ENCODE measurements at regions of chr22 and their contacts with region 1.

Region 1: GRCh38 chr22:21641789-21642583 is at the start of gene SDF2L1:
- DNase-seq: peak; percentile 99
- ATAC-seq: peak; percentile 97
- H3K4me3 Mint-ChIP-seq: peak within 1 kb of the TSS; percentile 89
- H3K27ac Mint-ChIP-seq: peak within 1 kb of the TSS; percentile 89
- H3K4me1 Mint-ChIP-seq: peaks cover 26% of the 10 kb centered on the region
- H3K27me3 Mint-ChIP-seq: no peaks in the 10 kb centered on the region
- CTCF ChIP-seq: no peak
- total RNA-seq, gene SDF2L1: 38.6 to 41.3 TPM

Region 2: GRCh38 chr22:21624120-21624879 is 17.7 kb before region 1 on chr22:
- CTCF ChIA-PET with region 1: interaction called, 78 read pairs
- POLR2A ChIA-PET with region 1: interaction called, 98 read pairs
- intact Hi-C with region 1: no loop called
- DNase-seq: peak; percentile 66
- ATAC-seq: no peak
- H3K4me3 Mint-ChIP-seq: no peak overlapping the region
- H3K27ac Mint-ChIP-seq: peak overlapping the region; percentile 73
- H3K4me1 Mint-ChIP-seq: peaks cover 32% of the 10 kb centered on the region
- H3K27me3 Mint-ChIP-seq: no peaks in the 10 kb centered on the region
- CTCF ChIP-seq: peak; percentile 65

Region 3: GRCh38 chr22:21652010-21652546 is 10.1 kb after region 1 on chr22:
- CTCF ChIA-PET with region 1: interaction called, 32 read pairs
- POLR2A ChIA-PET with region 1: interaction called, 30 read pairs
- intact Hi-C with region 1: no loop called
- DNase-seq: peak; percentile 95
- ATAC-seq: peak; percentile 97
- H3K4me3 Mint-ChIP-seq: peak overlapping the region; percentile 89
- H3K27ac Mint-ChIP-seq: peak overlapping the region; percentile 83
- H3K4me1 Mint-ChIP-seq: peaks cover 22% of the 10 kb centered on the region
- H3K27me3 Mint-ChIP-seq: no peaks in the 10 kb centered on the region
- CTCF ChIP-seq: no peak

Region 4: DNA sequence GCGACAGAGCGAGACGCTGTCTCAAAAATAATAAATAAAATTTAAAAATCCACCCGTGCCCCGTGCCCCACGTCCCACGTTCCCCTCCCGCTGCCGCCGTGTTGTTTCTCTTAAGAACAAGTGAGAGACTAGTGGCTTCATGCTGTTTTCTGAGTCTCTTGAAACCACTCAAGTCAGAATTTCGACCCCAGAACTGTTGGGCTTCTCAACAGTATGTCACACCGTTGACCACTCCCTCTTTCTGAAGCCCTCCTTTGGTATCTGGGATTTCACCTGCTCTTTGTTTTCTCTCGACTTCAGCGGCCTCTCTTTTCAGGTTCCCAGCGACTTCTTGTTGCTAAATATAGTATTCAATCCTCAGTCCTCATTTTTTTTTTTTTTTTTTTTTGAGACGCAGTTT is 24.8 kb after region 1 on chr22:
- CTCF ChIA-PET with region 1: interaction called, 10 read pairs
- POLR2A ChIA-PET with region 1: interaction called, 4 read pairs
- intact Hi-C with region 1: no loop called
- DNase-seq: no peak
- ATAC-seq: no peak
- H3K4me3 Mint-ChIP-seq: peak overlapping the region; percentile 89
- H3K27ac Mint-ChIP-seq: peak overlapping the region; percentile 97
- H3K4me1 Mint-ChIP-seq: peaks cover 27% of the 10 kb centered on the region
- H3K27me3 Mint-ChIP-seq: no peaks in the 10 kb centered on the region
- CTCF ChIP-seq: no peak

Region 5: GRCh38 chr22:21927174-21927823 is 285.3 kb after region 1 on chr22:
- CTCF ChIA-PET with region 1: no interaction called
- POLR2A ChIA-PET with region 1: no interaction called
- intact Hi-C with region 1: no loop called
- DNase-seq: no peak
- ATAC-seq: no peak
- H3K4me3 Mint-ChIP-seq: no peak overlapping the region
- H3K27ac Mint-ChIP-seq: no peak overlapping the region
- H3K4me1 Mint-ChIP-seq: no peaks in the 10 kb centered on the region
- H3K27me3 Mint-ChIP-seq: no peaks in the 10 kb centered on the region
- CTCF ChIP-seq: no peak

Measured in activated CD8-positive, alpha-beta T cell treated with anti-CD3 and anti-CD28 coated beads for 36 hours (primary cell).